OCI-LY7 (cell line): ENCODE measurements at regions of chr15 and their contacts with region 1.

Region 1: GRCh38 chr15:27589260-27589659 is 509.9 kb downstream of the OCA2 start:
- DNase-seq: no peak
- H3K4me3 ChIP-seq: no peak overlapping the region
- H3K27ac ChIP-seq: no peak overlapping the region
- H3K4me1 ChIP-seq: no peaks in the 10 kb centered on the region
- CTCF ChIP-seq: no peak

Region 2: DNA sequence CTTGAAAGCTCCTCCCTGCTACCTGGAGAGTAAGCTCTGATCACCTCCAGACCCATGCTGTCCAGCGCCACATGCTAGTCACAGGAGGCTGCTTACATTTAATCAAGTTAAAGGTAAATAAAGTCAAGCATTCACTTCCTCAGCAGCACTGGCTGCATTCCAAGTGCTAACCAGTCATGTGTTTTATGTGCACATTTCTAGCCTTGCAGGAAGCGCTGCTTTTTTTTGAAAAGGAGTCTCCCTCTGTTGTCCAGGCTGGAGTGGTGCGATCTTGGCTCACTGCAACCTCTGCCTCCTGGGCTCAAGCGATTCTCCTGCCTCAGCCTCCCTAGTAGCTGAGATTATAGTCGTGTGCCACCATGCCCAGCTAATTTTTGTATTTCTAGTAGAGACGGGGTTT is 339.0 kb before region 1 on chr15:
- CTCF ChIA-PET with region 1: no interaction called
- POLR2A ChIA-PET with region 1: no interaction called
- intact Hi-C with region 1: no loop called
- DNase-seq: no peak
- H3K4me3 ChIP-seq: no peak overlapping the region
- H3K27ac ChIP-seq: no peak overlapping the region
- H3K4me1 ChIP-seq: no peaks in the 10 kb centered on the region
- CTCF ChIP-seq: no peak

Region 3: DNA sequence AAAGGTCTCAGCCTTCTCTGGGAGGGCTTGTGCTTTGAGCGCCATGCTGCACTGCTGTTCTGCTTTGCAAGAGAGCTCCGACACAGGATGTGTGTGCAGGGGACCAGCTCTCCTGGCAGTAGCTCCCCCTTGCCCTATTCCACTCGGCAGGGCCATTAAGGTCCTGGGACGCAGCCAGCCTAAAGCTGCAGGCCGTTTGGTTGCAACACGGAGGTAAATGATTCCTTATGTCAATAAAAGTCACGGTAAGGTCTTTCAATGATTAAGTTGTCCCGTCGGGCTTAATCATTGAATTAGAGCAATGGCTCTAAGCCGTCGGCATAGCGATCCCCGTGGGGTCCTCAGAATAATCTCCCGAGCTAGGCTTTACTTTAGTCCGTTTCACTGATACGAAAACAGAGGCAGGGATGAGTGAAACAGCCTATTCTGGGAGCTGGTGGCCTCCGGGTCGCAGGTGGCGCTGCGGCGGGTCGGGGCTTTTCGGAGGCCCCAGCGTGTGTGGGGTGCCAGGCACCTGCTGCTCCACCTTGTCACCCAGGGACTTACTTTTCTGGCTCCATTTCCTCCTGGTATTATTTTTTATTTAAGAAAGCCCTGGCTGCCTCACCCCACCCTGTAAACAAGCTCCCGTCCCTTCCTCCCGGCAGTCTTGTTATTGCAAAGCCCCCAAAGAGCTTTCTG is 15.3 kb before region 1 on chr15:
- CTCF ChIA-PET with region 1: no interaction called
- POLR2A ChIA-PET with region 1: no interaction called
- intact Hi-C with region 1: no loop called
- DNase-seq: no peak
- H3K4me3 ChIP-seq: no peak overlapping the region
- H3K27ac ChIP-seq: no peak overlapping the region
- H3K4me1 ChIP-seq: no peaks in the 10 kb centered on the region
- CTCF ChIP-seq: no peak

Region 4: DNA sequence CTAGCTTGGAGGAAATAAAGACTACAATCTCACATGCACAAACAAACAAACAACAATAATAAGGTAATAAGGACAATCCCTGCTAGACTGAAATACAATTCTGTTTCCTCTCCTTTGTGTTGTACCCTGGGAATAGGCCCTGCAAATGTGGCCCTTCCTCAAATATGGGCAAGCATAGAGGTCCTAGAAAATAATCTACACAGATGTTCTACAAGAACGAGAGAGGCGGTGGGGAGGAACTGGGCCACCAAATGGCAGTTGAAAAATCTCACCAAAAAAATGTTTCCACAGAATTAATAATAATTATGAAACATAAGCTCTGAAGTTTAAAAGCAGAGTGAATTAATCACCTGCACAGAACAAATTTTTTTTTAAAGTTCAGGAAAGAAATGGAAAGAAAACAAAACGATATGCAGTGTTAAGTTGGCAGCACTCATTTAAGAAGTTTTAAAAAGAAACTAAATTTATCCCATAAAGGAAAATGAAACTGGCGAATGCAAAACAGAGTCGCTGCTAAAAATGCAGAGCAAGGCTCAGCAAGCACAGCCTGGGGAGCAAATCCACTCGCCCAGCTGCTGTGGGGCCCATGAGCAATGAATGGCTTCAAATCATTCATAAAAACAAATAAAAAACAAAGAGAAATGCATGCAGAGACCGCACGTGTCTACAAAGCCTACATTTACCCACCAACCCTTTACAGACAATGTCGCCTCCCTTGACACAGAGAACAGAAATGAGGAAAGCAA is 34.5 kb after region 1 on chr15:
- CTCF ChIA-PET with region 1: no interaction called
- POLR2A ChIA-PET with region 1: no interaction called
- intact Hi-C with region 1: loop called (anchors 1 kb)
- DNase-seq: peak; percentile 3
- H3K4me3 ChIP-seq: no peak overlapping the region
- H3K27ac ChIP-seq: no peak overlapping the region
- H3K4me1 ChIP-seq: no peaks in the 10 kb centered on the region
- CTCF ChIP-seq: no peak

Region 5: GRCh38 chr15:27768732-27769475 is 179.6 kb after region 1 on chr15:
- CTCF ChIA-PET with region 1: no interaction called
- POLR2A ChIA-PET with region 1: no interaction called
- intact Hi-C with region 1: no loop called
- DNase-seq: no peak
- H3K4me3 ChIP-seq: no peak overlapping the region
- H3K27ac ChIP-seq: no peak overlapping the region
- H3K4me1 ChIP-seq: no peaks in the 10 kb centered on the region
- CTCF ChIP-seq: no peak